Ovary (tissue), 10 donors: ENCODE measurements at regions of chr2 and their contacts with region 1.

Region 1: GRCh38 chr2:126784028-126784427 is 114.7 kb upstream of the TEX51 start:
- DNase-seq: no peak
- H3K4me3 ChIP-seq: no peak overlapping the region
- H3K27ac ChIP-seq: no peak overlapping the region
- H3K4me1 ChIP-seq: no peaks in the 10 kb centered on the region
- H3K27me3 ChIP-seq: no peaks in the 10 kb centered on the region
- CTCF ChIP-seq: no peak
- EP300 ChIP-seq: no peak
- POLR2A ChIP-seq: no peak

Region 2: DNA sequence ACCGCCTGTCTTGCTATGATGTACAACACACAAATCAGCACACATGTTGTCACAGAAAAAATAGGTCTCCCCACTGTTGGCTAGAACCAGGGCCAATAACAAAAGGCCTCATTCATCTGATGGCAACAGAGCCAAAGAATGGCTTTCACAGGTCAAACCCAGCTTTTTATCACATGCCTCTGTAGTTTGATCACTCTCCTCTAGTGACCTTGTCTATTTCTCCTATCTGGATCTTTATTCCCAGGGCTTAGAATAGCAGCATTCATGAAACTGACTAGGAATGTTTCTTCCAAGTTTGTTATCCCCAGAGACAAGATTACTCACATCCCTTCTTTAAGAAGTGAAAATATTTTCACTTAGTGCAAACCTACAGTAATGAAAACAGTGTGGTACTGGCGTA is 413.8 kb before region 1 on chr2:
- intact Hi-C with region 1: loop called in 1 of 4 experiments (anchors 10 kb)
- DNase-seq: no peak
- H3K4me3 ChIP-seq: no peak overlapping the region
- H3K27ac ChIP-seq: no peak overlapping the region
- H3K4me1 ChIP-seq: no peaks in the 10 kb centered on the region
- H3K27me3 ChIP-seq: no peaks in the 10 kb centered on the region
- CTCF ChIP-seq: no peak
- EP300 ChIP-seq: no peak
- POLR2A ChIP-seq: no peak